ENCODE measurements at regions of chr11 and their contacts with region 1.

Region 1: DNA sequence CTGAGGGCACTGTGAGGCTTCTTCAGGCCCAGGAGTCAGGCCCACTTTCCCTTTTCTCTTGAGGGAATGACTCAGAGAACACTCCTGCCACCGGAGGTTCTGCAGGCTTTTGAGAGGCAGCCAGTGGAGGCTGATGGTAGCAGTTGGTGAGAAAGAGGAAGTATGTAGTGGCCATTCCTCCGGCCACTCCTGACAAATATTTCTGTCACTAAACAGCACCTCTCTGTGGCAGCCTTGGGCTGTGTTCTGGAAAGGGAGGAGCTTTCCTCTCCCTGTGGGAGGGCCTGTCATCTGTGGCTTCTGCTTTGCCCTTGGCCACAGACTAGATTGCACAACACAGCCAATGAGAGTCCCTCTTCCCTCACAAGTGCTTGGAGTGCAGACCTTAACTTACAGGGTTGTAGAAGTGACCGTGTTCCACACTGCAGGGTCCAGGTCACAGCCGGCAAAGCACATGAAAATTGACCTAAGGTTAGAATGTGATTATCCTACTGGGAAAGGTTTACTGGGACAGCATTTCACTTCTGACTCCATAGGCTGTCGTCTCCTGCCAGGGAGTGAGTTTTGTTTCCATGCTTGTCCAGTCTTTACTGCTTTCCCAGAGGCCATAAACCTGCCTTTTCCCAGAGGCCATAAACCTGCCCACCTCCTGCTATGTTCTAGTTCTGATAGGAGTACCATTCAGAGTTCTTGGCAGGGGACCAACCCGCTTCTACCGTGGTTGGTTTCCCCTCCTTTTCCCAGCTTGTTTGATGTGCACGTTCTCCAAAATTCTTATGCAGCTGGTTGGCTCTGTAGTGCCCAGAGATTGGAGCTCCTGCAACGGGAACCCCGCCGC is 33.3 kb downstream of the MARK2 start:
- DNase-seq: no peak
- H3K4me3 ChIP-seq: no peak overlapping the region
- H3K27ac ChIP-seq: no peak overlapping the region
- H3K4me1 ChIP-seq: peaks cover 4 to 25% (median 8%) of the 10 kb centered on the region in 4 experiments
- H3K27me3 ChIP-seq: no peaks in the 10 kb centered on the region
- CTCF ChIP-seq: peak; percentile 14 to 45 (median 34)
- EP300 ChIP-seq: no peak
- POLR2A ChIP-seq: no peak
- RAD21 ChIP-seq: peak; percentile 51 to 61

Region 2: DNA sequence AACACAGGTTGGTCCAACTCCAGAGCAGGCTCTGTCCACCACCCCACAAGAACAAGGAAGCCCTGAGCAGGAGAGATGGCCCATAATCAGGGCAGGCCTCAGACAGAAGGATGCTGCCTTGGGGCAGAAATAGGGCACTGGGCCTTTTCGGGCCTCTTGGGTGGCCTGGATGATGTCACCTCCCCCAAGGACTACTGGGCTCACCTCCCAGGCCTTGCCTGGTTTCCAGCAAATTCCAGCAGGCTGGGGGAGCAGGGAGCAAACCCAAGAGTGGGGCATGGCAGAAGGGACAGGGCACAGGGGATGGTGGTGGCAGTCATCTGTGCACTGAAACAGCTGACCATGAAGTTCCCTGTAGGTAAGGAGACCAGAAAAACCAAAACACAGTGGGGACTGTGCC is 61.3 kb after region 1 on chr11:
- CTCF ChIA-PET with region 1: interaction called, 13 read pairs
- POLR2A ChIA-PET with region 1: no interaction called
- DNase-seq: no peak
- H3K4me3 ChIP-seq: no peak overlapping the region
- H3K27ac ChIP-seq: no peak overlapping the region
- H3K4me1 ChIP-seq: peaks cover 0 to 4% (median 0%) of the 10 kb centered on the region in 4 experiments; a peak in 1 of 7 replicates
- H3K27me3 ChIP-seq: peaks cover 0 to 3% (median 2%) of the 10 kb centered on the region in 4 experiments; a peak in 3 of 7 replicates
- CTCF ChIP-seq: no peak
- EP300 ChIP-seq: no peak
- POLR2A ChIP-seq: no peak
- RAD21 ChIP-seq: no peak

Measured in H1 (cell line).